RWPE1 (cell line): ENCODE measurements at regions of chr19 and their contacts with region 1.

Region 1: GRCh38 chr19:46192992-46193650 is 36.4 kb upstream of the IGFL1 start:
- DNase-seq: peak; percentile 70
- H3K27ac ChIP-seq: peak overlapping the region; percentile 91
- CTCF ChIP-seq: no peak

Region 2: DNA sequence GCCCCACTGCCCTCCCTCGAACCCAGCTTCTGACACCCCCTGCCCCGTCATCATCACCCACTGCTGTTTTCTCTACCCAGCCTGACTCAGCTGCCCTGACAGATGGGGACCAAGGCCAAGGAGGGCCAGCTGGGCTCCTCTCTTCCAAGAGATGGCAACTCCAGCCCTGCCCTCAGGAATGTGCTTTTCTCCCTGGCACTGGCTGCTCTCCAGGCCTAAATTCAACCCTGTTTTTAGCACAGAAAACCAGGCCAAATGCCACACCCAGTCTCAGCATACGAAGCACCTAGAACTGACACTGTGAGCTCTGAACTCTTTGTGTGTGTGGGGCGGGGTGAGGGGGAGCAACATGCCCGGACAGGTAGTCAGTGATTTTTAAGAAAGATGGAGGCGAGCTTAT is 13.0 kb after region 1 on chr19:
- CTCF ChIA-PET with region 1: no interaction called
- POLR2A ChIA-PET with region 1: no interaction called
- DNase-seq: peak; percentile 89
- H3K27ac ChIP-seq: peak overlapping the region; percentile 91
- CTCF ChIP-seq: no peak

Region 3: DNA sequence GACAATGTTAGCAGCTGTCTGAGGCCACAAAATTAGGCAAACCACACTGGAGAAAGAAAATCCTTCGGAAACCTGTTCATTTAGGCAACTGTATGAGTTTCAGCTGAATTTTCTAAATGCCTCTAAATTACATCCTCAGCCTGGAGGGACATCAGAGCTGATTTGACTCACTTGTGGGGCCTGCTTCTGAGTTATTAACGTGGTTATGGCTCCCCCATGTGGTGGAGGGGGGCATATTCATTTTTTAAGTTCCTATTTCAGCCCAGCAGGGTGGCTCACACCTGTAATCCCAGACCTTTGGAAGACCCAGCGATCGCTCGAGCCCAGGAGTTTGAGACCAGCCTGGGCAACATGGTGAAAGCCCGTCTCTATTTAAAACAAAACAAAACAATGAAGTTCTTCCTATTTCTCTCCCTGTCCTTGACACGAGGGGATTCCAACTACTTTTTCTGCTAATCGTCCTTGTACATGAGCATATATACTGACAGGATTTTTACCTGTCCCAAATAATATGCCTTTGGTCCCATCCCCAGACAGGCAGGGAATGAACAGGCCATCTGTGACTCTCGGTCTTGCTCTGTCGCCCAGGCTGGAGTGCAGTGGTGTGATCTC is 72.2 kb after region 1 on chr19:
- CTCF ChIA-PET with region 1: interaction called, 10 read pairs
- POLR2A ChIA-PET with region 1: no interaction called
- DNase-seq: peak; percentile 79
- H3K27ac ChIP-seq: no peak overlapping the region
- CTCF ChIP-seq: peak; percentile 78